ENCODE measurements at regions of chr16 and their contacts with region 1.

Region 1: DNA sequence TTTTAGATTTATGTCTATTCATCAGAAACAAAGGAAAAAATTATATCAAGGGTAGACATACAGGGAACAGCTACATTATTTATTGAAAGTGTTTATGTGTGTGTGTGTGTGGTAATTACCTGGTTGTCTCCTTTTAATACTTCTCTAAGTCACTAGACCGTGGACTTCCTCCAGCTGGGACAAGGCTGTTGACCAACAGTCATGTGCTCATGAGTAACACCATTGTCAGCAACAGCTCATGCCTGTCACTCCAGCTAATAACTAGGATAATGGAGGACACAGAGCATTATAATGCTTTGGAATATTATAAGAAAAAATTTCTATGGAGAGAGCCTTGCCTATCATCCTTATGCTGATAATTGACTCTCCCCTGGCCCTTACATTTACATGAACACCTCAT is 125.3 kb upstream of the SALL1 start:
- DNase-seq: no peak
- H3K4me3 ChIP-seq: no peak overlapping the region
- H3K27ac ChIP-seq: no peak overlapping the region
- H3K27me3 ChIP-seq: no peaks in the 10 kb centered on the region
- CTCF ChIP-seq: no peak

Region 2: DNA sequence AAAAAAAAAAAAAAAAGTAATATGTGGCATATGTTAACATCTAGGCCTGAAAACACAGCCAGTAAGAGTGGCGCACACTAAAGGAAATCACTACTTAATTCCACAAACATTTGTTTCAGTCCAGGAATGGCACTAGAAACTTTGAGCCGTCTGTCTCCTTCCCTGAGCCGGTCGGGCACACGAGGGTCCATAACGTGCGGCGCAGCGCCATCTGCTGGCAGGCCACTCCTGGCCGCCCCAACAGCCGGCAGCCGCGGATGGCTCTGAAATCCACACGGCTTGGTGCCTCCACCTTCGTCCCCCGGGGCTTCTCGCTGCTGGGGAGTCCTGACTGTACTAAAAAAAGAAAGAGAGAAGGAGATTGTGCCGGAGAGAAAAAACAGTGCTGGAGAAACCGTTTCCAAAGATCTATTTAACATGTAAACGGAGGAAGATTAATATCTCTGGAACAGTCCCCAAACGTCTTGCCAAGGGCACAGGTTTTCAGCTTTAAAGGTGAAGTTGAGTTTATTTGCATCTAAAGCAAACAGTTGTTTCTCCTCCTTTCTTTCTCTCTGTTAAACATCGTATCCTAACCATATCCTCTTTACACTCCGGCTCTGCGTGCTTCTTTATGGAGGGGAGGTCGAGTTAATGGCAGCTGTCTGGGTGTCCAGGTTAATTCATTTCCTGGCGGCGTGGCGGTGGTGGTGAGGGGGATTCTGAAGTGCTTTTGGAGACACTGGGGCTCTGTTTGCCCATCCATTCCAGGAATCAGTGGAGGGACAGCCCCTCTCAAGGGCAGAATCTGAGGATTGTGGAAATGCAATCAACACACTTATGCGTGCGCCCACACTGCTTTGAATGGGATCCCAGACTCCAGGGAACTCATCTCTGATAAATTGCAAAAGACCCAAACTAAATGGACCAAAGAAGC is 486.0 kb after region 1 on chr16:
- in situ Hi-C with region 1: loop called (anchors 25 kb)
- DNase-seq: peak; percentile 43
- H3K4me3 ChIP-seq: no peak overlapping the region
- H3K27ac ChIP-seq: no peak overlapping the region
- H3K27me3 ChIP-seq: no peaks in the 10 kb centered on the region
- CTCF ChIP-seq: peak; percentile 94